Body of pancreas (tissue), 4 donors: ENCODE measurements at regions of chr5 and their contacts with region 1.

Region 1: DNA sequence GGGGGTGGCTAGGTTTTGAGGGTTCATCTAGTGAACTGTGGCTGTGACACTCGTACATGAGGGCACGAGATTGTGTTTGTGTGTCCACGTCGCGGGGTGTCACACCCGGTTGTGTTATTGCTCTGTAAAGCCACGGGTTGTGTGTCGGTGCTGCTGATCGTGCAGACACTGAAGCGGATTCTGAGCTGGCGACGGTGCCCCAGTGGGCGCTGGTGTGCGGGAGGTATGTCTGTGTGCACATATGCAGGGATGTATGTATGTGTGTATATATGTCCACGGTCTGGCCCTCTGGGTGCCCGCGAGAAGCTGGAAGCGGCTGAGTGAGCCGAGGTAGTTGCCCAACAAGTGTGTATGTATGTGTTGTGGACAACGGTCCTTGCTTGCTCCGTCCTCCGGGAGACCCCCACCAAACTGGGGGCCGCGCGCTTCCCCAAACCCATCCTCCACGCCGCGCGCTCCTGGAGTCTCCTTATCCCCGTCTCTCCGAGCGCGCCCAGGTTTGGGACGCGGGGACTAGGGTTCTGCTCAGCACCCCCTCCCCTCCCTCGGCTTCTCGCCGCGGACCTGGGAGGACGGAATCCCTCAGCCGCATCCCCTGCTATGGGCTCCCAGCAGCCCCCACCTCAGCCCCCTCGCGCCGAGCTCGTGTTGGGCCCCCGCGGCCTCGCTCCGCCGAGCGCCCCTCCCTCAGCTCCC is 596 bp downstream of the PCDH1 start:
- DNase-seq: peak in 3 of 4 donors; percentile 29 to 34 (median 32)
- ATAC-seq: no peak
- H3K4me3 ChIP-seq: peak overlapping the region; percentile 19 to 46
- H3K27ac ChIP-seq: peak overlapping the region; percentile 76 to 87 (median 81)
- H3K4me1 ChIP-seq: peaks cover 54% of the 10 kb centered on the region
- H3K27me3 ChIP-seq: peaks cover 0 to 6% of the 10 kb centered on the region in 2 donors
- CTCF ChIP-seq: no peak
- POLR2A ChIP-seq: no peak

Region 2: DNA sequence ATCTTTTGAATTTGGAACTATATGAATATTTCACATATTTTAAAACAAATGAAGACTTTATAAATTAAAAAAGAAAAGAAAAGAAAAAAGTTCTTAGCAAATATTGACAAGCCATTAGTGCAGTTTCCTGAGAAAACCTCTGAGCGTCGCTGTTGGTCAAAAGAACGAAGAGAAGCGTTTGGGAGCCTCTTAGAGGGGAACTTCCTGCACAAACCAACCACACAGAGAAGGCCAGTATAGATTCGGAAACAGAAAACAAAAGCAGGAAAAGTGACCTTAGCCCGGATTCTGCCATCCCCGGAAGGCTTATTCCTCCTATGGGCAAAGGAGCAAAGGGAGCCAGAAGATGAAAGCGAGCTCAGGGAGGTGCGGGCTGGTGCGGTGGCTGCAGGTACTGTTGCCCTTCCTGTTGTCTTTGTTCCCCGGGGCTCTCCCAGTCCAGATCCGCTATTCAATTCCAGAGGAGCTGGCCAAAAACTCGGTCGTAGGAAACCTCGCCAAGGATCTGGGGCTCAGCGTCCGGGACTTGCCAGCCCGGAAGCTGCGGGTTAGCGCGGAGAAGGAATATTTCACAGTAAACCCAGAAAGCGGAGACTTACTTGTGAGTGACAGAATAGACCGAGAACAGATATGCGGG is 517.7 kb before region 1 on chr5 and contains the start of gene PCDHGB2:
- intact Hi-C with region 1: no loop called
- DNase-seq: no peak
- ATAC-seq: peak; percentile 24
- H3K4me3 ChIP-seq: no peak within 1 kb of the TSS
- H3K27ac ChIP-seq: no peak within 1 kb of the TSS
- H3K4me1 ChIP-seq: no peaks in the 10 kb centered on the region
- H3K27me3 ChIP-seq: no peaks in the 10 kb centered on the region
- CTCF ChIP-seq: peak in 4 of 7 experiments; percentile 19 to 35 (median 28)
- POLR2A ChIP-seq: no peak
- total RNA-seq, gene PCDHGB2: 2.3 to 9.3 TPM

Region 3: GRCh38 chr5:141701360-141702119 is 176.1 kb before region 1 on chr5:
- intact Hi-C with region 1: loop called (anchors 2 kb)
- DNase-seq: no peak
- ATAC-seq: peak; percentile 3
- H3K4me3 ChIP-seq: no peak overlapping the region
- H3K27ac ChIP-seq: no peak overlapping the region
- H3K4me1 ChIP-seq: peaks cover 17% of the 10 kb centered on the region
- H3K27me3 ChIP-seq: peaks cover 0 to 8% of the 10 kb centered on the region in 2 donors
- CTCF ChIP-seq: no peak
- POLR2A ChIP-seq: no peak

Region 4: GRCh38 chr5:141722266-141722665 is 155.3 kb before region 1 on chr5:
- intact Hi-C with region 1: no loop called
- DNase-seq: no peak
- ATAC-seq: no peak
- H3K4me3 ChIP-seq: no peak overlapping the region
- H3K27ac ChIP-seq: no peak overlapping the region
- H3K4me1 ChIP-seq: peaks cover 5% of the 10 kb centered on the region
- H3K27me3 ChIP-seq: no peaks in the 10 kb centered on the region
- CTCF ChIP-seq: no peak
- POLR2A ChIP-seq: no peak

Region 5: GRCh38 chr5:141923448-141924352 is 46.1 kb after region 1 on chr5 and contains the start of gene DELE1:
- intact Hi-C with region 1: no loop called
- DNase-seq: peak; percentile 92 to 96 (median 94)
- ATAC-seq: peak; percentile 97
- H3K4me3 ChIP-seq: peak within 1 kb of the TSS; percentile 46 to 93
- H3K27ac ChIP-seq: peak within 1 kb of the TSS; percentile 87 to 98 (median 94)
- H3K4me1 ChIP-seq: peaks cover 18% of the 10 kb centered on the region
- H3K27me3 ChIP-seq: no peaks in the 10 kb centered on the region
- CTCF ChIP-seq: no peak
- POLR2A ChIP-seq: peak; percentile 79 to 91 (median 90)
- total RNA-seq, gene DELE1: 50.6 to 100 TPM

Region 6: DNA sequence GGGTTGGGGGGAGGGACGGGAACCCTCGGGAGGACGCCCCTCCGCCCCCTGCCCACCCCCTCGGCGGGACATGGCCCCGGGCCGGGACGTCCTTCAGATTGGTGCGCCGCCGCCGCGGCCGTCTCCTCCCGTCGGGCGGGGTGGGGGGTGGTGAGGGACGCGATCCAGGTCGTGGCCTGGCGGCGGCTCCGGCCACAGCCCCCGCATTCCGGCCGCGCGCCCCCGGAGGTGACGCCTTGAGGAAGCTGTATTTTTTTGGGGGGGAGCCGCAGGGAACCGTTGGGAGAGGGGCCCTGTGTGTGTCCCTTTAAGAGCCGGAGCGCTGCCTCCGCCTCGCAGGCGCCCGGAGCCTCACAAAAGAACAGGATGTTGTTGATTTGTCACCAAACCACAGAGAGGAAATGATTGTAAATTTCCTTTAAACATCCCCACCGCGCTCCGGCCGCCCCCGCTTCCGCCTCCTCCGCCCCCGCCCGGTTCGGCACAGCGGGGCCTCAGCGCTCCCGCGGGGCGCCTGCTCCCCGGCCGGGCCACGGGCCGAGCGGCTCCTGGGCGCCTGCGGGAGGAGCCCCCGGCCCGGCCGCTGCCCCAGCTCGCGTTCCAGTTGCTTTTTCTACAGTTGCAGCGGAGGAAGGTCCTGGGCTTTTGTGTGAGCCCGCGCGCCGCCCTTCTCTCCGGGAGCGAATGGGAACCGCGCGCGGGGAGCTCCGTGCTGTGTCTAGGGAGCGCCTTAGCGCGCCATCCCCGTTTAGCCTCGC is 479.3 kb after region 1 on chr5:
- intact Hi-C with region 1: no loop called
- DNase-seq: peak; percentile 61 to 80 (median 72)
- ATAC-seq: peak; percentile 77
- H3K4me3 ChIP-seq: peak overlapping the region; percentile 27 to 45
- H3K27ac ChIP-seq: peak overlapping the region; percentile 88 to 91 (median 89)
- H3K4me1 ChIP-seq: peaks cover 36% of the 10 kb centered on the region
- H3K27me3 ChIP-seq: no peaks in the 10 kb centered on the region
- CTCF ChIP-seq: peak in 1 of 7 experiments; percentile 3
- POLR2A ChIP-seq: peak; percentile 44 to 50 (median 49)